PC-3 (cell line): ENCODE measurements at regions of chr1 and their contacts with region 1.

Region 1: DNA sequence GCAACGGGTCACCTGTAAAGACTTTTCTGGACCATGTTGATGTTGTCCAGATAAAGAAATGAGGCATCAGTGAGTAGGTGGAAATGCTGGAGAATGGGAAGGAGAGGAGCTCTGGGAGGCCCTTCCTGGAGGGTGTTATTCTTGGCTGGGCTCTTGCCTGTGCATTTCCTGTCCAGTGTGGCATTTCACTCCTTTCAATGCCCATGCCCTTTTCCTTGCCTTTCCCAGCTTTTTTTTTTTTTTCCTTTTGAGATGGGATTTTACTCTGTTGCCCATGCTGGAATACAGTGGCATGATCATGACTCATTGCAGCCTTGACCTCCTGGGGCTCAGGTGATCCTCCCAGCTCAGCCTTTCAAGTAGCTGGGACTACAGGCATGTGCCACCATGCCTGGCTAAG is 11.8 kb downstream of the NOS1AP start:
- DNase-seq: peak; percentile 56
- ATAC-seq: peak; percentile 59
- H3K4me3 ChIP-seq: no peak overlapping the region
- H3K27ac ChIP-seq: no peak overlapping the region
- H3K4me1 ChIP-seq: peaks cover 11% of the 10 kb centered on the region
- H3K27me3 ChIP-seq: no peaks in the 10 kb centered on the region
- CTCF ChIP-seq: no peak

Region 2: DNA sequence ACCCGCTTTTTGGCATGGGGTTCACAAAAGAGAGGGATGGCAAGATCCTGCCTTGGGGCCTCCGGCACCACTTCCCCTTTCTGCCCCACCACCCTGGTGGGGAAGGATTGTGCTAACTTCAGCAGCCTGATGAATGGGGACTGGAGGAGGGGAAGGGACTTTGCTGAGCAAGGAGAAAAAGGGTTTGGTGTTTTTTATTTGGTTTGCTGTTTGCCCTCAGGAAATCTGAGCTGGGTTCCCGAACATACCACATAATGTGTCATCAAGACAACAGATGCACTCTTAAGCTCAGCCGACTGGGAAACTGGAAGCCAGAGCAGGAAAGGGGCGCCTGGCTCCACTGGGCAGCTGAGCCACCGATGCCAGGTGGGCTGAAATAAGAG is 77.5 kb before region 1 on chr1:
- CTCF ChIA-PET with region 1: no interaction called
- POLR2A ChIA-PET with region 1: interaction called, 10 read pairs
- intact Hi-C with region 1: no loop called
- DNase-seq: peak; percentile 97
- ATAC-seq: peak; percentile 87
- H3K4me3 ChIP-seq: peak overlapping the region; percentile 59
- H3K27ac ChIP-seq: peak overlapping the region; percentile 97
- H3K4me1 ChIP-seq: peaks cover 32% of the 10 kb centered on the region
- H3K27me3 ChIP-seq: no peaks in the 10 kb centered on the region
- CTCF ChIP-seq: no peak